GM12878 (cell line): ENCODE measurements at regions of chr12 and their contacts with region 1.

Region 1: GRCh38 chr12:48988030-48988649 is 10.0 kb downstream of the WNT1 start:
- DNase-seq: no peak
- ATAC-seq: peak; percentile 87
- H3K4me3 ChIP-seq: no peak overlapping the region
- H3K27ac ChIP-seq: no peak overlapping the region
- H3K4me1 ChIP-seq: peaks cover 8% of the 10 kb centered on the region
- H3K27me3 ChIP-seq: peaks cover 0 to 12% of the 10 kb centered on the region in 2 experiments; a peak in 3 of 4 replicates
- CTCF ChIP-seq: peak; percentile 83 to 92 (median 88)
- EP300 ChIP-seq: no peak
- POLR2A ChIP-seq: no peak
- RAD21 ChIP-seq: peak; percentile 55

Region 2: GRCh38 chr12:48890657-48891418 is 97.3 kb before region 1 on chr12:
- CTCF ChIA-PET with region 1: interaction called, 10 read pairs
- POLR2A ChIA-PET with region 1: no interaction called
- RAD21 ChIA-PET with region 1: no interaction called
- SMC1A ChIA-PET with region 1: interaction called, 4 read pairs
- in situ Hi-C with region 1: no loop called
- intact Hi-C with region 1: no loop called
- DNase-seq: no peak
- ATAC-seq: peak; percentile 100
- H3K4me3 ChIP-seq: no peak overlapping the region
- H3K27ac ChIP-seq: no peak overlapping the region
- H3K4me1 ChIP-seq: no peaks in the 10 kb centered on the region
- H3K27me3 ChIP-seq: no peaks in the 10 kb centered on the region; a peak in 1 of 4 replicates
- CTCF ChIP-seq: peak; percentile 94 to 95 (median 95)
- EP300 ChIP-seq: no peak
- POLR2A ChIP-seq: no peak
- RAD21 ChIP-seq: peak; percentile 78

Region 3: DNA sequence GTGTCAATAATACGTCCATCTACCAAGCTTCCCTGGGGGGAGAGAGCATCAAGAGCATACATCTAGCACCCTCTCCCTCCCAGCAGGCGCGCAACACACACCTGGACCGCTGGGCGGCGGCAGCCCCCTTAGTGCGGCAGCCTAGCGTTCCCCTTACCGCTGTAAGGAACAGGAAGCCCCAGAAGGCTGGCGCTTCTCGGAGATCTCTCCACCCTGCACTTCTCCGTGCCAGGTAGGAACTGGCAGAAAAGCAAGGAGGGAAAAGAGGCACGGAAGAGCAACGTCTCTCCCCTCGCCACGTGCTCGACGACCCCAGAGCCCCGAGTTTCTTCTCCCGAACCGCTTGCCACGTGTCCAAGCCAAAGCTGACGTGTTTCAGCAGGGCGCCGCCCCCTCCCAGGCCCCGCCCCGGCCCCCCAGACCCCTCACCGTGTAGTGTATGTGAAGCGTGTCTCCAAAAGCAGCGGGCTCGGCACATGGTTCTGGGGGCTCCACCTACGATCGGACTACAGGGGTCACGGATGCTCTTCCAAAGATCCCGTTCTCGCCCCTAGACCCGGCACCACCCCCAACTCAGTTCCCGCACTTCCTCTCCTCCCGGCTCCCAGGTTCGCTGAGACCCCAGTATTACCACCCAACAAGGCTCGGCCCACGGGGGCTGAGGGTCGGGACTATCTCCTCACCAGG is 63.4 kb before region 1 on chr12:
- CTCF ChIA-PET with region 1: interaction called, 93 read pairs
- POLR2A ChIA-PET with region 1: interaction called, 4 read pairs
- RAD21 ChIA-PET with region 1: interaction called, 35 read pairs
- SMC1A ChIA-PET with region 1: interaction called, 16 read pairs
- in situ Hi-C with region 1: no loop called
- intact Hi-C with region 1: loop called (anchors 1 kb)
- DNase-seq: peak; percentile 40
- ATAC-seq: peak; percentile 92
- H3K4me3 ChIP-seq: peak overlapping the region; percentile 98
- H3K27ac ChIP-seq: peak overlapping the region; percentile 90
- H3K4me1 ChIP-seq: peaks cover 22% of the 10 kb centered on the region
- H3K27me3 ChIP-seq: no peaks in the 10 kb centered on the region
- CTCF ChIP-seq: peak; percentile 88 to 95 (median 93)
- EP300 ChIP-seq: no peak
- POLR2A ChIP-seq: no peak
- RAD21 ChIP-seq: peak; percentile 88

Region 4: GRCh38 chr12:48946205-48946604 is 41.9 kb before region 1 on chr12:
- CTCF ChIA-PET with region 1: interaction called, 24 read pairs
- POLR2A ChIA-PET with region 1: no interaction called
- RAD21 ChIA-PET with region 1: no interaction called
- SMC1A ChIA-PET with region 1: interaction called, 3 read pairs
- in situ Hi-C with region 1: no loop called
- intact Hi-C with region 1: no loop called
- DNase-seq: no peak
- ATAC-seq: no peak
- H3K4me3 ChIP-seq: no peak overlapping the region
- H3K27ac ChIP-seq: no peak overlapping the region
- H3K4me1 ChIP-seq: no peaks in the 10 kb centered on the region; the same call in 1 of the 2 replicates
- H3K27me3 ChIP-seq: no peaks in the 10 kb centered on the region
- CTCF ChIP-seq: no peak
- EP300 ChIP-seq: no peak
- POLR2A ChIP-seq: no peak
- RAD21 ChIP-seq: no peak

Region 5: GRCh38 chr12:48969833-48970701 is 18.1 kb before region 1 on chr12:
- CTCF ChIA-PET with region 1: interaction called, 65 read pairs
- POLR2A ChIA-PET with region 1: interaction called, 4 read pairs
- RAD21 ChIA-PET with region 1: interaction called, 17 read pairs
- SMC1A ChIA-PET with region 1: interaction called, 17 read pairs
- in situ Hi-C with region 1: no loop called
- intact Hi-C with region 1: no loop called
- DNase-seq: no peak
- ATAC-seq: peak; percentile 51
- H3K4me3 ChIP-seq: no peak overlapping the region
- H3K27ac ChIP-seq: no peak overlapping the region
- H3K4me1 ChIP-seq: peaks cover 47% of the 10 kb centered on the region
- H3K27me3 ChIP-seq: peaks cover 19 to 30% of the 10 kb centered on the region in 2 experiments
- CTCF ChIP-seq: peak in 1 of 3 experiments; percentile 7; a peak in 2 of 6 replicates
- EP300 ChIP-seq: no peak
- POLR2A ChIP-seq: no peak
- RAD21 ChIP-seq: no peak

Region 6: DNA sequence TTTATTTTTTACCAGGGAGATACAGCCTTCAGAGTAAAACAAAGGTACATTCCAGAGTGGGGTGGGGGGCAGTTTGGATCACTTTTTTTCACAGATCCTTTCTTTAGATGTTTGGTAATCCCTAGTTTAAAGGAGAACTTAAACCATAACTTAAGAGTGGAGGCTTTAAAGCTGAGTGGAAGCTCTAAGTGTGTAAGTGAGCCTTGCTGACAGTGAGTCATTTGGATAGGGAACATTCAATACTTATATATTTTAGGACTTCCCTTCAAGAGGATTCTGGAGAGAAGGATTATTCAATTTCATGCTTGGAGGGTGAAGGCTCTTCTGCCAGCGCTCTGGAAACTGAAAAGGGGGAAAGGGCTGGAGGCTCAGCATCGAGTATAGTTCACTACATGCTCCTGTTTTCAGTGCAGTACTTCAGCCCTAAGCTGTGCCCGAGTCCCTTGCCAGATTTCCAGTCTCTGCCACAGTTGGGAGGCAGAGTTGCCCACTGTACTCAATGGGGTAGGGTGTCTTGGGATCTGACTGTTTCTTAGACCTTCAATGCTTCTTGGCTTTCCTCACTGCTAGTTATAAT is 22.0 kb after region 1 on chr12:
- CTCF ChIA-PET with region 1: interaction called, 172 read pairs
- POLR2A ChIA-PET with region 1: interaction called, 3 read pairs
- RAD21 ChIA-PET with region 1: interaction called, 4 read pairs
- SMC1A ChIA-PET with region 1: interaction called, 3 read pairs
- in situ Hi-C with region 1: no loop called
- intact Hi-C with region 1: no loop called
- DNase-seq: no peak
- ATAC-seq: no peak
- H3K4me3 ChIP-seq: no peak overlapping the region
- H3K27ac ChIP-seq: no peak overlapping the region
- H3K4me1 ChIP-seq: no peaks in the 10 kb centered on the region
- H3K27me3 ChIP-seq: no peaks in the 10 kb centered on the region
- CTCF ChIP-seq: no peak
- EP300 ChIP-seq: no peak
- POLR2A ChIP-seq: no peak
- RAD21 ChIP-seq: no peak

Region 7: GRCh38 chr12:49088190-49088931 is 100.2 kb after region 1 on chr12:
- CTCF ChIA-PET with region 1: interaction called, 10 read pairs
- POLR2A ChIA-PET with region 1: no interaction called
- RAD21 ChIA-PET with region 1: interaction called, 3 read pairs
- SMC1A ChIA-PET with region 1: interaction called, 5 read pairs
- in situ Hi-C with region 1: no loop called
- intact Hi-C with region 1: no loop called
- DNase-seq: peak; percentile 44
- ATAC-seq: peak; percentile 96
- H3K4me3 ChIP-seq: 0 out of 2 replicates have a peak overlapping the region, but pooled peaks have one; percentile 5
- H3K27ac ChIP-seq: no peak overlapping the region
- H3K4me1 ChIP-seq: peaks cover 3% of the 10 kb centered on the region; the same call in 1 of the 2 replicates
- H3K27me3 ChIP-seq: peaks cover 27 to 35% of the 10 kb centered on the region in 2 experiments; a peak in 3 of 4 replicates
- CTCF ChIP-seq: peak; percentile 92 to 95 (median 94)
- EP300 ChIP-seq: no peak
- POLR2A ChIP-seq: peak; percentile 31; the same call in 1 of the 2 replicates
- RAD21 ChIP-seq: peak; percentile 76